ENCODE measurements at regions of chr1 and their contacts with region 1.

Region 1: DNA sequence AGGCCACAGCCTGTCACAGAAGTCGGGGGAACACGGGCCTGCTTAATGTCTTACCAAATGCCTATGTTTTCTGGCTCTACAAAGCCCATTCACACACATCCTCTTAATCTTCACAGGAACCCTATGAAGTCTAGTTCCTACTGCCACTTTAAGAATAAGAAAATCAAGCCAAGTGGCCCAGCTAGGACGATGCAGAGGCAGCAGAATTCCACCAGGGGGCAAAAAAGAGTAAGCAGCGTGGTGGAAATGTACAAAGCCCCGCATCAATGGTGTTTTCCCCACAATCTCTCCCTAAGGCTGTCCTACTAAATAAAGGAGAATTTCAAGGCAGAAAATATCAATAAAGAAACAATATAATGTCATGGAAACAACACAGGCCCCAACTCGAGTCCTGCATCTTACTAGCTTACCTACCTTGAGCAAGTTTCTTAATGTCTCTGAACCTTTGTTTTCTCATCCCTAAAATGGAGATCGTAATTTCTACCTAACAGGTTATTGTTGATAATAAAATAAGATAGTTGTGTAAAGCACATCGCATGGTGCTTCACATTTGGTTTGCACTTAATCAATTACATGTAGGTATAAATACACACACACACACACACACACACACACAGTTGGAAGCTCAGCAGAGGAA is 21.4 kb downstream of the SEC16B start:
- DNase-seq: peak; percentile 29 to 69
- H3K4me3 ChIP-seq: no peak overlapping the region
- H3K27ac ChIP-seq: no peak overlapping the region
- H3K4me1 ChIP-seq: peaks cover 0 to 5% (median 0%) of the 10 kb centered on the region in 4 experiments; a peak in 2 of 7 replicates
- H3K27me3 ChIP-seq: no peaks in the 10 kb centered on the region
- CTCF ChIP-seq: peak; percentile 72 to 90 (median 77)
- EP300 ChIP-seq: no peak
- POLR2A ChIP-seq: no peak
- RAD21 ChIP-seq: peak; percentile 67 to 78

Region 2: GRCh38 chr1:177256153-177257075 is 692.0 kb before region 1 on chr1:
- CTCF ChIA-PET with region 1: interaction called, 34 read pairs
- POLR2A ChIA-PET with region 1: no interaction called
- DNase-seq: peak; percentile 49 to 88
- H3K4me3 ChIP-seq: no peak overlapping the region
- H3K27ac ChIP-seq: no peak overlapping the region
- H3K4me1 ChIP-seq: peaks cover 0 to 4% (median 0%) of the 10 kb centered on the region in 4 experiments; a peak in 2 of 7 replicates
- H3K27me3 ChIP-seq: no peaks in the 10 kb centered on the region
- CTCF ChIP-seq: peak; percentile 63 to 70 (median 69)
- EP300 ChIP-seq: no peak
- POLR2A ChIP-seq: no peak
- RAD21 ChIP-seq: peak; percentile 79

Region 3: GRCh38 chr1:177913762-177914540 is 34.5 kb before region 1 on chr1:
- CTCF ChIA-PET with region 1: interaction called, 274 read pairs
- POLR2A ChIA-PET with region 1: no interaction called
- DNase-seq: peak in 1 of 2 experiments; percentile 57
- H3K4me3 ChIP-seq: no peak overlapping the region
- H3K27ac ChIP-seq: no peak overlapping the region
- H3K4me1 ChIP-seq: no peaks in the 10 kb centered on the region
- H3K27me3 ChIP-seq: no peaks in the 10 kb centered on the region; a peak in 1 of 7 replicates
- CTCF ChIP-seq: peak; percentile 69 to 84 (median 81)
- EP300 ChIP-seq: no peak
- POLR2A ChIP-seq: no peak
- RAD21 ChIP-seq: peak; percentile 84 to 85

Region 4: GRCh38 chr1:177928194-177928593 is 20.3 kb before region 1 on chr1:
- CTCF ChIA-PET with region 1: interaction called, 274 read pairs
- POLR2A ChIA-PET with region 1: no interaction called
- DNase-seq: no peak
- H3K4me3 ChIP-seq: no peak overlapping the region
- H3K27ac ChIP-seq: no peak overlapping the region
- H3K4me1 ChIP-seq: 0 out of 7 replicates have a peak, but pooled peaks cover 0 to 3% (median 0%) of the 10 kb centered on the region in 4 experiments
- H3K27me3 ChIP-seq: no peaks in the 10 kb centered on the region
- CTCF ChIP-seq: peak; percentile 26 to 58 (median 55)
- EP300 ChIP-seq: no peak
- POLR2A ChIP-seq: no peak
- RAD21 ChIP-seq: peak; percentile 52 to 59

Region 5: DNA sequence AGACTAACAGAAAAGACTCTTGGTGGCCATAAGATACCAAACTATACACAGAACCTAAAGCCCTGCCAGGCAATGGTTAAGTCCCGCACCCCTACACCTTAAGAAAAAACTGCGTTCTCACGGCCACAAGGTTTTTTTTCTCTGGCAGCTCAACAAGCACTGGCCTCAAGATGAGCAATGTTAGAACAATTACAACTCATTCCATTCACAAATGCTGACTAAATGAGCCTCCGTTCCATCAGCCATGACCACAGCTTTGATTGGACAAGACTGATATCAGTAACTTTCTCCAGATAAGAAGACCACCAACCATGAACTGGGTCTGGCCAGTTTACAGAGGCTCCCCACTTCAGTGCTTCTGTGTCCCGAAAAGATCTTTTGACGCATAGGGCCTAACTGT is 10.5 kb before region 1 on chr1:
- CTCF ChIA-PET with region 1: interaction called, 92 read pairs
- POLR2A ChIA-PET with region 1: interaction called, 4 read pairs
- DNase-seq: no peak
- H3K4me3 ChIP-seq: no peak overlapping the region
- H3K27ac ChIP-seq: no peak overlapping the region
- H3K4me1 ChIP-seq: peaks cover 0 to 2% (median under 1%) of the 10 kb centered on the region in 4 experiments; a peak in 1 of 7 replicates
- H3K27me3 ChIP-seq: no peaks in the 10 kb centered on the region
- CTCF ChIP-seq: no peak
- EP300 ChIP-seq: no peak
- POLR2A ChIP-seq: no peak
- RAD21 ChIP-seq: no peak

Region 6: GRCh38 chr1:178086294-178086693 is 137.8 kb after region 1 on chr1:
- CTCF ChIA-PET with region 1: no interaction called
- POLR2A ChIA-PET with region 1: no interaction called
- DNase-seq: no peak
- H3K4me3 ChIP-seq: no peak overlapping the region
- H3K27ac ChIP-seq: no peak overlapping the region
- H3K4me1 ChIP-seq: no peaks in the 10 kb centered on the region
- H3K27me3 ChIP-seq: no peaks in the 10 kb centered on the region
- CTCF ChIP-seq: no peak
- EP300 ChIP-seq: no peak
- POLR2A ChIP-seq: no peak
- RAD21 ChIP-seq: no peak